Activated T-helper 2 cell treated with anti-CD3 and anti-CD28 coated beads, Interferon-gamma antibody, Interleukin-2, Interleukin-4, amounts not matched to agents 10 μg/mL and 5 μg/mL and 100 μg/mL, durations not matched to agents 14 hours and 24 hours and 36 hours (primary cell): ENCODE measurements at regions of chr2 and their contacts with region 1.

Region 1: GRCh38 chr2:225052703-225053102 is 10.4 kb upstream of the DOCK10 start:
- DNase-seq: peak; percentile 44
- H3K4me3 Mint-ChIP-seq: peak overlapping the region; percentile 9
- H3K27ac Mint-ChIP-seq: peak overlapping the region; percentile 76
- H3K4me1 Mint-ChIP-seq: peaks cover 52% of the 10 kb centered on the region
- H3K27me3 Mint-ChIP-seq: peaks cover 18% of the 10 kb centered on the region

Region 2: GRCh38 chr2:224861261-224861660 is 191.4 kb before region 1 on chr2:
- intact Hi-C with region 1: no loop called
- DNase-seq: no peak
- H3K4me3 Mint-ChIP-seq: no peak overlapping the region
- H3K27ac Mint-ChIP-seq: no peak overlapping the region
- H3K4me1 Mint-ChIP-seq: no peaks in the 10 kb centered on the region
- H3K27me3 Mint-ChIP-seq: no peaks in the 10 kb centered on the region

Region 3: GRCh38 chr2:225030203-225030602 is 22.5 kb before region 1 on chr2:
- intact Hi-C with region 1: no loop called
- DNase-seq: peak; percentile 36
- H3K4me3 Mint-ChIP-seq: no peak overlapping the region
- H3K27ac Mint-ChIP-seq: peak overlapping the region; percentile 89
- H3K4me1 Mint-ChIP-seq: peaks cover 66% of the 10 kb centered on the region
- H3K27me3 Mint-ChIP-seq: no peaks in the 10 kb centered on the region

Region 4: GRCh38 chr2:225064362-225064761 is 11.7 kb after region 1 on chr2:
- intact Hi-C with region 1: loop called (anchors 1 kb)
- DNase-seq: no peak
- H3K4me3 Mint-ChIP-seq: no peak overlapping the region
- H3K27ac Mint-ChIP-seq: peak overlapping the region; percentile 69
- H3K4me1 Mint-ChIP-seq: peaks cover 43% of the 10 kb centered on the region
- H3K27me3 Mint-ChIP-seq: no peaks in the 10 kb centered on the region